ENCODE measurements at regions of chr20 and their contacts with region 1.

Region 1: DNA sequence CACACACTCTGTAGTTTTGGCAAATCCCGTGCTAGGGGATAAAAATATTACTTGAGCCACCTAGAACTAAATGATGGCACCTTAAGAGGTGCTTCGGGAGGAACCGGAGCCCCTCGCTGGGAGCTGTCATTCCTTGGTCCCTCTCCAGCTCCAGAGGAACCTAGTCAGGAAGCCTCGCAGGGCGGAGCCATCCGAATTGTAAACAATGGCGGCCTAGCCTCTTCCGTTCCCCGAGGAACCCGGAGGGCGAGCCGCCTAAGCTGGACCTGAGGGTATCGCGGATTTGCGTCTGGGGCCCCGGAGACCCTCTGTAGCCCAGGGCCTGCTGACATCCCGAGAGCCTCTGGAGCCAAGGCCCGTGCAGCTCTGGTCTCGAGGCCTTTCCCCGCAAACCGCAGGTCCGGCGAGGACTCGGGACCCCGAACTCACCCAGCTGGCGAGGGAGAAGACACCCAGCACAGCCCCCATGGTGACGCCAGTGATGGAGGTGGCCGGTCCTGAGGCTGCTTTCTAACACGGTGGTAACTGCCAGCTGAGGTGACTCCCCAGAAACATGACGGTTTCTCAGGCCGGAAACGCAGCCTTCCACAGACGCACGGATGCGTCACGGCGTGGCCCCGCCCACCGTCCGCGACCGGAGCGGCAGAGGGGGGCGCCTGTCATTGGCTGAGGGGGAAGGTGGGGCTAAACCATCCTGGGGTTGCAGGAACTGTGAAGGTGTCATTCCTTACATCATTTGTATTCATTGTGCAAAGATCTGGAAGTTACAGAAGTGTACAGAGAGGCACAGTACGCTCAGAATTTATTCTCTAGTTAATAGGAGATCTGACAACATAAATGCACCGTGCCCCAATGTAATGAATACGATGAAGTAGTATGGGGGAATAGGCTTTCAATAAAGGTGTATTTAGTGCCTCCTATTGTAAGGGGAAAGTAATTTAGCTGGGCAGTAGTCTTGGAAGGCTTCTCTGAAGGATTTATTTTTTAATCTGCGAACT is at the start of gene SERINC3:
- DNase-seq: peak; percentile 96 to 99 (median 97)
- H3K4me3 ChIP-seq: peak within 1 kb of the TSS; percentile 79
- H3K4me3 Mint-ChIP-seq: peak within 1 kb of the TSS; percentile 80 to 96 (median 90)
- H3K27ac ChIP-seq: peak within 1 kb of the TSS; percentile 99
- H3K27ac Mint-ChIP-seq: peak within 1 kb of the TSS; percentile 89 to 99 (median 98)
- H3K4me1 ChIP-seq: peaks cover 49% of the 10 kb centered on the region
- H3K4me1 Mint-ChIP-seq: peaks cover 47 to 62% (median 62%) of the 10 kb centered on the region in 3 donors
- H3K27me3 ChIP-seq: no peaks in the 10 kb centered on the region
- H3K27me3 Mint-ChIP-seq: peaks cover 2% of the 10 kb centered on the region in 2 donors
- total RNA-seq, gene SERINC3: 59.9 to 61.6 TPM

Region 2: DNA sequence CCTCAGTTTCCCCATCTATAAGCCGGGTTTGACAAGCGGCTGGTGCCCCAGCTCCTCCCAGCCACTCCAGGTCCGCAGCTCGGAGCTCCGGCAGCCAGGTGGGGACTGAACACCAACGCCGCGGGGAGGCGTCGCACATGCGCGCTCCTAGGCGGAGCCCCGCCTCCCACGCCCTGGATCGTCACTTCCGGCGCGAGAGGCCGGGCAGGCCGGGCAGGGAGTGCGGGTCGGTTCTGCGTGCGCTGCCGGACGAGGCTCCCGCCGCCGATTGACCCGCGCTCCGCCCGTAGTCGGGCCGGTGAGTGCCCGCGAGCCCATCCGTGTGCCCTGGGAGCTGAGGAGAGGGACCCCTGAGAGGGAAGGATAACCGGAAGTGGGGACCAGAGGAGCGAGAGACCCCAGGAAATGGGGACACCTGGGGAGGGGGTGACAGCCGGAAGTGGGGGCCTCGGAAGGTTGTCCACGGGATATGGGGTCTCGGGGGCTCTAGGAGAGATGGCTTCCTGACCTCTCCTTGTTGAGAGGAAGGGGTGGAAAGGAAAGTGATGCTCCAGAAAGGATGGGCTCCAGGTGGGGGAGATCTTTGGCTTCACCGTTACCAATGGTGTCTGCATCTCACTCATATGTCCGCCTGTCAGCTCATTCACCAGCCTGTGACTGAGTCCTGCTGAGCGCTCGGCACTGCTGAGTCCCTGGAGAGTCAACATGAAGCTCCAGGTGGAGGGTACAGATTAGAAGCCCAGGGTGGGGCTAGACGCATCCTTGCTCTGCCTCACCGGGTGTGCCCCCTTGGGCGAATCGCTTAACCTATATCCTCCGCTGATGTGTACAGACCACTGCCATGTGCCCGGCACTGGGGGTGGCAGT is 45.9 kb before region 1 on chr20 and contains the start of gene TTPAL:
- CTCF ChIA-PET with region 1: interaction called, 4 read pairs
- POLR2A ChIA-PET with region 1: interaction called, 10 read pairs
- DNase-seq: peak; percentile 81 to 91 (median 86)
- H3K4me3 ChIP-seq: peak within 1 kb of the TSS; percentile 75
- H3K4me3 Mint-ChIP-seq: peak within 1 kb of the TSS; percentile 89 to 97 (median 91)
- H3K27ac ChIP-seq: peak within 1 kb of the TSS; percentile 95
- H3K27ac Mint-ChIP-seq: peak within 1 kb of the TSS; percentile 92 to 100 (median 96)
- H3K4me1 ChIP-seq: peaks cover 15% of the 10 kb centered on the region
- H3K4me1 Mint-ChIP-seq: peaks cover 24 to 36% (median 31%) of the 10 kb centered on the region in 3 donors
- H3K27me3 ChIP-seq: no peaks in the 10 kb centered on the region
- H3K27me3 Mint-ChIP-seq: no peaks in the 10 kb centered on the region
- total RNA-seq, gene TTPAL: 29.3 to 31.6 TPM

Region 3: GRCh38 chr20:46190478-46191167 is 1668.8 kb after region 1 on chr20:
- CTCF ChIA-PET with region 1: no interaction called
- POLR2A ChIA-PET with region 1: interaction called, 12 read pairs
- DNase-seq: no peak
- H3K4me3 ChIP-seq: no peak overlapping the region
- H3K4me3 Mint-ChIP-seq: no peak overlapping the region
- H3K27ac ChIP-seq: no peak overlapping the region
- H3K27ac Mint-ChIP-seq: peak overlapping the region in 1 of 8 donors; percentile 94
- H3K4me1 ChIP-seq: no peaks in the 10 kb centered on the region
- H3K4me1 Mint-ChIP-seq: no peaks in the 10 kb centered on the region
- H3K27me3 ChIP-seq: no peaks in the 10 kb centered on the region
- H3K27me3 Mint-ChIP-seq: peaks cover 6 to 41% of the 10 kb centered on the region in 2 donors